Endothelial cell of umbilical vein (primary cell): ENCODE measurements at regions of chr17 and their contacts with region 1.

Region 1: DNA sequence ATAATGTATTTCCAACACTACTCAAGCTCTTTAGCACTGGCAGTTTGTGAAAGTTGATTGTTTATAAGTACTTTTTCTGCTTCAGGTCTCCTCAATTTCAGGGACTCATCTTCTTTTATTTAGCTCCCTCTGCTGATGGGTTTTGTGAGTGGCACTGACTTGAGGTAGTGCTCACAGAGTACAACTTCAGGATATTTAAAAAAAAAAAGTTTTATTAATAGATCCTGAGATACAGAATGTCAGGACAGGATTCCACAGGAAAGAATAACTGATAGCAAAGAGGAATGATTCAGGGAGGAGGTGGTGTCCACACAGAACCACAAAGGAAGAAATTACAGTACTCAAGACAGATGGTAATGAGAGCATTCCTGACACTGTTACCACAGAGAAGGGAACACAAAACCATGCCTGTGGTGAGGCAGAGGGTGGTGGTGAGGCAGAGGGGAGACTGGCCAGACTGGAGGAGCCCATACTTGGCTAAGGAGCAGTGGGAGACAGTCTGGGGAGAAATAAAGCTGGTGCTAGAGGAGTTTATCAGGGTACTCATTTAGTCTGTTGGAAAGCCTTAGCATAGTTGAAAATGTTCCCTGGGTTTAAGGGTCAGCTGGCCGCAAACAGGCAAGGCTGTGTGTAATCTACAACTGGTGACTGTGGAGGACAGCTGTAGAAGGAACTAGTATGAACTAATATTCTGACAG is 63.7 kb downstream of the SPAG9 start:
- DNase-seq: peak; percentile 84
- H3K4me3 ChIP-seq: no peak overlapping the region
- H3K27ac ChIP-seq: peak overlapping the region; percentile 2
- H3K4me1 ChIP-seq: peaks cover 16% of the 10 kb centered on the region
- H3K27me3 ChIP-seq: no peaks in the 10 kb centered on the region
- CTCF ChIP-seq: peak; percentile 33 to 46
- POLR2A ChIP-seq: no peak

Region 2: GRCh38 chr17:51000835-51001638 is 55.9 kb before region 1 on chr17:
- CTCF ChIA-PET with region 1: interaction called, 100 read pairs
- POLR2A ChIA-PET with region 1: no interaction called
- dilution Hi-C with region 1: no loop called
- intact Hi-C with region 1: loop called (anchors 1 kb)
- DNase-seq: peak; percentile 78
- H3K4me3 ChIP-seq: no peak overlapping the region
- H3K27ac ChIP-seq: no peak overlapping the region
- H3K4me1 ChIP-seq: peaks cover 3% of the 10 kb centered on the region
- H3K27me3 ChIP-seq: no peaks in the 10 kb centered on the region
- CTCF ChIP-seq: peak; percentile 18 to 42
- POLR2A ChIP-seq: no peak

Region 3: DNA sequence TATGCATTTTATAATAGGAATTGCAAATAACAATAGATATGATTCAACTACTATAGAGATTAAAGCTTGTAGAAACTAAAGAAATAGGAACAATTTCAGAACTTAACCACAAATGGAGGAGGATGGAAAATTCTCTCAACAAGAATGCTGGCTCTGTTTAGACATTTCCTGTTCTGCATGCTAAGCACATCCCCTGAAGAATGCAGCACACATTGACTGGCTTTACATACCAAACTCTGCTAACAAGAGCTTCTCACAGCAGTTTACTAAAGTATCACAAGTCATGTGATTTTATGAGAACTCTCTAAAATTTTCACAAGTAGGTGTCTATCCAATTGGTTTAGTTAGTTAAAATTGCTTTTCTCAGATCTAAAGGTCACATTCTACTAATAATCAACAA is 21.5 kb before region 1 on chr17:
- CTCF ChIA-PET with region 1: interaction called, 10 read pairs
- POLR2A ChIA-PET with region 1: no interaction called
- dilution Hi-C with region 1: no loop called
- intact Hi-C with region 1: no loop called
- DNase-seq: peak; percentile 68
- H3K4me3 ChIP-seq: no peak overlapping the region
- H3K27ac ChIP-seq: no peak overlapping the region
- H3K4me1 ChIP-seq: peaks cover 3% of the 10 kb centered on the region
- H3K27me3 ChIP-seq: no peaks in the 10 kb centered on the region
- CTCF ChIP-seq: no peak
- POLR2A ChIP-seq: no peak

Region 4: DNA sequence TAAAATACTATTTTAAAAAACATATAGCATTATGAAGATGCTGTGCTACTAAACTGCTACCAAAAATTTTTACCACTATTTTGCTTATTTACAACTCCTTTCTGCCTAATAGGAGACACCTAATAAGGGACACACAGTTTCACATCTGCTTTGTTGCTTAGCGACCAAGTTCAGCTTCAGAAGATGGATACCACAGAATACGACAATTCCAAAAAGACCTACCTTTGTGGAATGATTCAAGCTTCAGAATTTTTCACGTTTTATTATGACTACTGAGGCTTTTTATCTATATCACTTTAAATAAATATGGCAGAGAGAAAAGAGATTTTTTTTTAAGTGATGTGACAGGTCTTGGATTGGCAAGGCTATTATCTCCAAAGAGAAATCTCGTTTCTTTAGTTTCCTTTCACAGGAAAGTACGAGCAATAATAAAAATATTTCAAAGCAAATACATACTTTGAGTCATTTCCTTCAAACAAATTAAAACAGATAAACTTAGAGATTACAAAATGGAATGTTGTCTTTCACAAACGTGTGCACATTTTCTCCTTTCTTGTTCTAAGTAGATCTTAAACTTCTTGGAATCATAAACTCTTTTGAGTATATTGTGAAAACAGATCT is 28.3 kb after region 1 on chr17:
- CTCF ChIA-PET with region 1: interaction called, 13 read pairs
- POLR2A ChIA-PET with region 1: no interaction called
- dilution Hi-C with region 1: no loop called
- intact Hi-C with region 1: no loop called
- DNase-seq: peak; percentile 79
- H3K4me3 ChIP-seq: peak overlapping the region in 1 of 3 experiments; percentile 32
- H3K27ac ChIP-seq: peak overlapping the region; percentile 48
- H3K4me1 ChIP-seq: peaks cover 21% of the 10 kb centered on the region
- H3K27me3 ChIP-seq: no peaks in the 10 kb centered on the region
- CTCF ChIP-seq: no peak
- POLR2A ChIP-seq: no peak